ENCODE measurements at regions of chr3 and their contacts with region 1.

Region 1: DNA sequence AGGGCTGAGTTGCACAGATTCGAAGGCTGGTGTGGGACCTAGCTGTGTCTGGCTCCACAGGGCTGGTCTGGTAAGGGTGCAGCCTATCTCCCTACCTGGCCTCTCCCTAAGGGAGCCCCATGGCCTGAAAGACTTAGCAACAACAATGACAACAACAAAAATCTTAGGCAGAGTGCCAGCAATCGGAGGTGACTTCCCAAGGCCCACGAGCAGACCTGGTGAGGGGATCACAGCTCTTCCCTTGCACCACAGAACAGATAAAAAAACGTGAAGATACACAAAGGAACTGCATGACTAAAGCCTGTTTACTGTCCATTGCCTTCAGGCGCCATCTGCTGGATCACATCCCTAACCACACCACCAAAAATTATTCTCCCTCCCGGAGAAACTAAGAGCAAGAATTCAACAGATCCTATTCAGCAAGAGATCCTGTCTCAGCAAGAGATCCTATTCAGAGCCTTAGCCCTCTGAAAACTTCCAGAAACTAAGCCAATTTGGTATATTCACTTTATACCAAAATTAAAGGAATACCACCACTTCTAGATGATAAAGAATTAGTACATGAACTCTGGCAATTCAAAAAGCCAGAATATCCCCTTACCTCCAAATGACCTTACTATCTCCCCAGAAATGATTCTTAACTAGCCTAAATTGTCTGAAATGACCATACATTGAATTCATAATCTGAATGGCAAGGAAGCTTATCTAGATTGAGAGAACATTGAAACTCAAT is 24.1 kb upstream of the OR5K4 start:
- DNase-seq: no peak
- H3K4me3 ChIP-seq: no peak overlapping the region
- H3K27ac ChIP-seq: no peak overlapping the region
- H3K4me1 ChIP-seq: no peaks in the 10 kb centered on the region
- H3K27me3 ChIP-seq: no peaks in the 10 kb centered on the region
- CTCF ChIP-seq: peak in 2 of 3 experiments; percentile 32 to 40

Region 2: DNA sequence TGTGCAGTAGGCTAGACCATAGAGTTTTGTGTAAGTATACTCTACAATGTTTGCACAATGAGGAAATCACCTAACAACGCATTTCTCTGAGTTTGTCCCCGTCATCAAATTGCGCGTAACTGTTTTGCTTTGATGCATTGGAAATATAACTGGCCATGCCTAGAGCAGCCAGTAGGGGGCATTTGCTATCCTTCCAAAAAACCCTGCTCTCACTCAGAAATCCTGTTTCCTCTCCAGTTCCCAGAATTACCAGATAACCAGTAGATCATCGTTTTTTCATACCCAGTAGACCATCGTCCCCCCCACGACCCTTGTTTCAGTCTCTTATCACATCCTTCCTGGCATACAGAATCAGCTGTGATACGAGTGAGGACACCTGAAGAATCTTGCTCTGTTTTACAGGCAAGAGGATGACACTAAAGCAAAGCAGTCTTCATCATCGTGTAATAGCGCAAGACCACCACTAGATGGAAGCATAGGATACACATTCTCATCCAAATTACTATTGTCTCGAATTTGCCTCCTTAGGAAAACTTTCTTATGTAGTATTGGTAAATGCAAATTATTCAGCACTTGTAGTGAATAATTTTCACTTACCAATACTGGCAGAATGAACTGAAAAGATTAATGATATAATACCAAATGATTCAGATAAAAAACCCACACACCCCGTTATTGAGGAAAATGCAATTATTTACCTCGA is 290.1 kb before region 1 on chr3:
- intact Hi-C with region 1: loop called (anchors 5 kb)
- DNase-seq: peak in 1 of 2 donors; percentile 74
- H3K4me3 ChIP-seq: peak overlapping the region in 1 of 2 donors; percentile 48
- H3K27ac ChIP-seq: no peak overlapping the region
- H3K4me1 ChIP-seq: no peaks in the 10 kb centered on the region
- H3K27me3 ChIP-seq: no peaks in the 10 kb centered on the region
- CTCF ChIP-seq: peak; percentile 58 to 87 (median 71)

Region 3: DNA sequence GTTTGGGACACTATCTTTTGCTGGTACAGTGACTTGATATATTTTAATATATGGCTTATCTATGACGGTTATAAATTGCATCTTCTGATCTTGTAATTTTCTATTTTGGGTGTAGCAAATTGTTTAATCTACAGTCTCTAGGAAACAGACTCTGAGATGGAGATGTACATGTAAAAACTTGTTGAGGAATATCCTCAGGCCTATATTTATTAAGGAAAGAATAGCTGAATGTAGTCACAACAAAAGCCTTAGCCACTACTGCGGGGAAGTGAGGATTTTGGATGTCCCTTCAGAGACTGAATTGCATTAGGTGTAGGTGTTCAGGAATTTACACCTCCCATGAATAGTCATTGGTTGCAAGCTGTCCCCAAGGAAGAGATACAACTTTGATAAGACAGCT is 47.1 kb after region 1 on chr3:
- intact Hi-C with region 1: no loop called
- DNase-seq: no peak
- H3K4me3 ChIP-seq: no peak overlapping the region
- H3K27ac ChIP-seq: no peak overlapping the region
- H3K4me1 ChIP-seq: no peaks in the 10 kb centered on the region
- H3K27me3 ChIP-seq: no peaks in the 10 kb centered on the region
- CTCF ChIP-seq: no peak

Region 4: DNA sequence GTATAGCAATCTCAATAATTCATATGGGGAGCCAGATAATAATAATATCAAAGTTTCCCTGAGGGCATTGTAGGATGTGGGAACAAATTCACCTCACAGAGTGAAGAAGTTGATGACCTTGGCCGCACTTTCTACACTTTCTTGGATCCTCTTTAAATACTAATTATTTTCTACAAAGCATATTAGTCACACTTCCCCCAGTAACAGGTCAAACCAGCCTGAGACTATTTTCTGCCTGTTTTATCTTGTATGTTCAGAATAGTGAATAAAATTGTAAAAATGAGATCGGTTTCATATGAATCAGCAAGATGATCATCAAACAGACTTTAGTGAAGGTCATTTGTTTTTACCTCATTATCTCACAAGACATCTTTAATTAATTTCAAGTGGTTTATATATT is 58.6 kb after region 1 on chr3:
- intact Hi-C with region 1: no loop called
- DNase-seq: no peak
- H3K4me3 ChIP-seq: no peak overlapping the region
- H3K27ac ChIP-seq: no peak overlapping the region
- H3K4me1 ChIP-seq: no peaks in the 10 kb centered on the region
- H3K27me3 ChIP-seq: no peaks in the 10 kb centered on the region
- CTCF ChIP-seq: no peak